Heart left ventricle (tissue), 16 donors: ENCODE measurements at regions of chr13 and their contacts with region 1.

Region 1: GRCh38 chr13:72527333-72527732 is 200.1 kb downstream of the MZT1 start:
- DNase-seq: no peak
- ATAC-seq: no peak
- H3K4me3 ChIP-seq: no peak overlapping the region
- H3K27ac ChIP-seq: no peak overlapping the region
- H3K4me1 ChIP-seq: no peaks in the 10 kb centered on the region
- H3K27me3 ChIP-seq: peaks cover 0 to 7% (median 0%) of the 10 kb centered on the region in 9 donors
- CTCF ChIP-seq: no peak
- POLR2A ChIP-seq: no peak

Region 2: GRCh38 chr13:72125561-72125960 is 401.8 kb before region 1 on chr13:
- intact Hi-C with region 1: no loop called
- DNase-seq: no peak
- ATAC-seq: no peak
- H3K4me3 ChIP-seq: no peak overlapping the region
- H3K27ac ChIP-seq: no peak overlapping the region
- H3K4me1 ChIP-seq: no peaks in the 10 kb centered on the region
- H3K27me3 ChIP-seq: no peaks in the 10 kb centered on the region
- CTCF ChIP-seq: no peak
- POLR2A ChIP-seq: no peak

Region 3: DNA sequence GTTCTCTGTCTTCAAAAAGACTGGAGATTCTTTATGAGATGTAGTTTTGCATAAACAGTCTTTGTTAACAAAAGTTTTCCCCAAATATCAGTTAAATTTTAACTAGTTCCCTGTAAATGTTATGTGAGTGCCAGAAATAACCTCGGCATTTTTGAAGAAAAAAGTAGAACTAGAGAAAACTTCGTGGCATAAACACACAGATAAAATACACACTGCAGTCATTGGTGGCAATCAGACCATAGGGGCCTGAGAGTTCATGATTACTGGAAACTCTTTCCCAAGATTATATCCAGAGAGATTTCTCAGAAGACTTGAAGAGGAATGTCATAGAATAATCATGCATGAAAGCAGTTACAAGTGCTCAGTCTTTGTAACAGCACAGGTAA is 10.1 kb after region 1 on chr13:
- intact Hi-C with region 1: no loop called
- DNase-seq: no peak
- ATAC-seq: no peak
- H3K4me3 ChIP-seq: peak overlapping the region in 3 of 12 donors; percentile 5 to 43 (median 32)
- H3K27ac ChIP-seq: no peak overlapping the region
- H3K4me1 ChIP-seq: no peaks in the 10 kb centered on the region
- H3K27me3 ChIP-seq: no peaks in the 10 kb centered on the region
- CTCF ChIP-seq: no peak
- POLR2A ChIP-seq: no peak

Region 4: GRCh38 chr13:72556945-72557344 is 29.6 kb after region 1 on chr13:
- intact Hi-C with region 1: loop called in 1 of 10 experiments (anchors 2 kb)
- DNase-seq: no peak
- ATAC-seq: no peak
- H3K4me3 ChIP-seq: no peak overlapping the region
- H3K27ac ChIP-seq: no peak overlapping the region
- H3K4me1 ChIP-seq: no peaks in the 10 kb centered on the region
- H3K27me3 ChIP-seq: no peaks in the 10 kb centered on the region
- CTCF ChIP-seq: no peak
- POLR2A ChIP-seq: no peak

Region 5: DNA sequence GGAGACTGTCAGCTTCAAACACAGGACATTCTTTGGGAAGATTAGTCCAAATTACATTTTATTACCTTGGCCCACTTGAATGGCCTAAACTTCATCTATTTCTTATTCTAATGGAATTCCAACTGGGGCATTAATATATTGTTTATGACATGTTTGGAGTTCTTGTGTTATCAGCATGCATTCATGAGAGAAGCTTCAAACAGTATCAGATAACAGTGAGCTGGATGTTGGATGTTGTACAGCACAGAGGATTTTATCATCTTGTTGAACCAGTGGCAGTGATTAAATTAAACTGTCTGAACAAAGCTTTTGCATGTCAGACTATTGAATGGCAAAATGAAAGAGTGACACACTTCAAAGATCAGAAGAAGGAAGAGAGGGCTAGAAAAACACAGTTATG is 150.1 kb after region 1 on chr13:
- intact Hi-C with region 1: no loop called
- DNase-seq: no peak
- ATAC-seq: no peak
- H3K4me3 ChIP-seq: no peak overlapping the region
- H3K27ac ChIP-seq: no peak overlapping the region
- H3K4me1 ChIP-seq: no peaks in the 10 kb centered on the region
- H3K27me3 ChIP-seq: peaks cover 0 to 3% (median 0%) of the 10 kb centered on the region in 9 donors
- CTCF ChIP-seq: no peak
- POLR2A ChIP-seq: no peak